Stomach (tissue), 19 donors: ENCODE measurements at regions of chr22 and their contacts with region 1.

Region 1: GRCh38 chr22:25172153-25172552 is 27.5 kb upstream of the CRYBB3 start:
- DNase-seq: peak; percentile 44 to 50
- H3K4me3 ChIP-seq: no peak overlapping the region
- H3K27ac ChIP-seq: no peak overlapping the region
- H3K4me1 ChIP-seq: no peaks in the 10 kb centered on the region
- H3K27me3 ChIP-seq: no peaks in the 10 kb centered on the region
- CTCF ChIP-seq: peak in 5 of 7 experiments; percentile 21 to 77 (median 48)
- EP300 ChIP-seq: no peak
- POLR2A ChIP-seq: no peak

Region 2: DNA sequence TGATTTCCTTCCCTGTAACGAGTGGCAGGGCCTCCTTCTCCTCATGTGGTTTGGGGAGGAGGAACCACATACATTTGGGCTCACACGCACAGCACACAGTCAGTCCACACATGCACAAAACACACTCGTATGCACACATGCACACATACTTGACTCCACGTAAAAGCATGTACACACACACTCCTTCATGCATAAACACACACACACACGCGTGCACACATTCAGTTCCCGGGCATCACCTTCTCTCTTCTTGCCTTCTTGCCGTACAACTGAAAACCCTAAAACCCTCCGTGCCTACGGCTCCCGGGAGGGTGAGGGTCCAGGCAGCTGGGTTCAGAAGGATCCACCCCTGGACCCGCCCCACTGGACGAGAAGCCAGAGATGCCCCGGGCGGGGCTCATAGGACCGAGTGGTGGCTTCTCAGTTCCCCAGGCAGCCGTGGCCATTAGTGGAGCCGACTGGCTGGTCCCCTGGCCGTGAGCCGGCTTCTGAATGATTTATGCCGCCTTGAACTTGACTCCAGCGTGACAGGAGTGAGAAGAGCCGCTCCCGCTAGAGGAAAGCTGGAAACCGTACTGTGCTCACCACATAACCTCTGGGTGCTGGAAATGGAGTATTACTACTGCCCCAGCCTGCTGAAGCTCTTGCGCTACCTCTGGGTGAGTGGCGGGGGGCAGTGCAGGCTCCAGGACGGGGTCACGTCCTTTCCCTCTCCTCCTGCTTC is 102.2 kb before region 1 on chr22:
- intact Hi-C with region 1: loop called (anchors 10 kb)
- DNase-seq: peak in 1 of 2 donors; percentile 43
- H3K4me3 ChIP-seq: peak overlapping the region; percentile 5 to 32 (median 17)
- H3K27ac ChIP-seq: peak overlapping the region in 4 of 5 donors; percentile 36 to 54 (median 48)
- H3K4me1 ChIP-seq: peaks cover 0 to 28% (median 8%) of the 10 kb centered on the region in 4 donors
- H3K27me3 ChIP-seq: no peaks in the 10 kb centered on the region
- CTCF ChIP-seq: no peak
- EP300 ChIP-seq: no peak
- POLR2A ChIP-seq: no peak

Region 3: GRCh38 chr22:25120093-25120561 is 52.0 kb before region 1 on chr22:
- intact Hi-C with region 1: no loop called
- DNase-seq: peak; percentile 77 to 87
- H3K4me3 ChIP-seq: no peak overlapping the region
- H3K27ac ChIP-seq: peak overlapping the region; percentile 82 to 90 (median 85)
- H3K4me1 ChIP-seq: peaks cover 18 to 44% (median 28%) of the 10 kb centered on the region in 4 donors
- H3K27me3 ChIP-seq: no peaks in the 10 kb centered on the region
- CTCF ChIP-seq: no peak
- EP300 ChIP-seq: no peak
- POLR2A ChIP-seq: no peak

Region 4: GRCh38 chr22:25572708-25573171 is 400.6 kb after region 1 on chr22:
- intact Hi-C with region 1: no loop called
- DNase-seq: no peak
- H3K4me3 ChIP-seq: no peak overlapping the region
- H3K27ac ChIP-seq: no peak overlapping the region
- H3K4me1 ChIP-seq: peaks cover 0 to under 1% (median 0%) of the 10 kb centered on the region in 4 donors
- H3K27me3 ChIP-seq: peaks cover 0 to 12% (median 0%) of the 10 kb centered on the region in 3 donors
- CTCF ChIP-seq: no peak
- EP300 ChIP-seq: no peak
- POLR2A ChIP-seq: no peak